ENCODE measurements at regions of chr3 and their contacts with region 1.

Region 1: GRCh38 chr3:11803977-11804892 is 42.5 kb downstream of the TAMM41 start:
- DNase-seq: no peak
- H3K4me3 ChIP-seq: no peak overlapping the region
- H3K27ac ChIP-seq: no peak overlapping the region
- H3K4me1 ChIP-seq: no peaks in the 10 kb centered on the region
- H3K27me3 ChIP-seq: no peaks in the 10 kb centered on the region
- CTCF ChIP-seq: peak; percentile 38 to 72 (median 63)
- POLR2A ChIP-seq: no peak

Region 2: GRCh38 chr3:11379233-11379823 is 424.9 kb before region 1 on chr3:
- intact Hi-C with region 1: loop called (anchors 5 kb)
- DNase-seq: no peak
- H3K4me3 ChIP-seq: peak overlapping the region in 2 of 8 donors; percentile 4 to 16
- H3K27ac ChIP-seq: peak overlapping the region in 6 of 8 donors; percentile 14 to 68 (median 45)
- H3K4me1 ChIP-seq: peaks cover 0 to 23% (median 4%) of the 10 kb centered on the region in 6 donors
- H3K27me3 ChIP-seq: no peaks in the 10 kb centered on the region
- CTCF ChIP-seq: peak in 10 of 11 experiments; percentile 30 to 77 (median 60)
- POLR2A ChIP-seq: no peak

Measured in spleen (tissue), 13 donors.